ENCODE measurements at regions of chr1 and their contacts with region 1.

Region 1: GRCh38 chr1:7224644-7225043 is 439.4 kb downstream of the CAMTA1 start:
- DNase-seq: no peak
- ATAC-seq: no peak
- H3K4me3 ChIP-seq: no peak overlapping the region
- H3K27ac ChIP-seq: no peak overlapping the region
- H3K4me1 ChIP-seq: no peaks in the 10 kb centered on the region
- H3K27me3 ChIP-seq: no peaks in the 10 kb centered on the region; a peak in 1 of 4 replicates
- CTCF ChIP-seq: no peak
- EP300 ChIP-seq: no peak
- POLR2A ChIP-seq: no peak
- RAD21 ChIP-seq: no peak

Region 2: GRCh38 chr1:7646981-7647901 is 422.6 kb after region 1 on chr1:
- CTCF ChIA-PET with region 1: no interaction called
- POLR2A ChIA-PET with region 1: no interaction called
- RAD21 ChIA-PET with region 1: no interaction called
- SMC1A ChIA-PET with region 1: no interaction called
- in situ Hi-C with region 1: no loop called
- intact Hi-C with region 1: loop called (anchors 5 kb)
- DNase-seq: no peak
- ATAC-seq: peak; percentile 89
- H3K4me3 ChIP-seq: no peak overlapping the region
- H3K27ac ChIP-seq: no peak overlapping the region
- H3K4me1 ChIP-seq: peaks cover 3% of the 10 kb centered on the region; the same call in 1 of the 2 replicates
- H3K27me3 ChIP-seq: no peaks in the 10 kb centered on the region; a peak in 1 of 4 replicates
- CTCF ChIP-seq: peak; percentile 82 to 89 (median 87)
- EP300 ChIP-seq: no peak
- POLR2A ChIP-seq: no peak
- RAD21 ChIP-seq: peak; percentile 79